SK-N-SH (cell line): ENCODE measurements at regions of chr3 and their contacts with region 1.

Region 1: DNA sequence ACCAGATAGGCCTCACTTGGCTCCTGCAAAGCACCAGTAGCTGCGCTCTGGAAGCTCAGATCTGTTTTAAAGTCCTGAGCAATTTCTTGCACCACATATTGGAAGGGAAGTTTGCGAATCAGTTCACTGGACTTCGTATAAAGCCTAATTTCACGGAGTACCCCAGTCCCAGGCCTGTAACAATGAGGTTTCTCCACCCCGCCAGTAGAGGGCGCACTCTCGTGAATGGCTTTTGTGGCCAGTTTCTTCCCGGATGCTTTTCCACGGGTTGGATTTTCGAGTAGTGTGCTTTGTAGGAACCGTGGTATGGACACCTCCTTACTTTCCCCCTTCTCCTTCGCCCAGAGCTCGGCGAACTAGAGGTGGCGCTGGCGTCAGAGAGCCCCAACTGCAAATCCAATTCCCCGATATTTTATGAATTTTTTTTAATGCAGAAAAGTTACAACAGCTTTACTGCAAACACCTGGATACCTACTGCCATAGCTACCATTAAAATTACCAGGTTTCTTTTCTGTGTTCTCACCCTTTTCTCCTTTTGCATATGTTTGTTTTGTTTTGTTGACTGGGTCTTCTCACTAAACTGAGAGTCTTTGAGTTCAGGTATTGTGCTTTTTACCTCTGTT is 13.3 kb downstream of the RARB start:
- DNase-seq: no peak
- H3K4me3 ChIP-seq: no peak overlapping the region
- H3K27ac ChIP-seq: no peak overlapping the region; a peak in 1 of 4 replicates
- H3K4me1 ChIP-seq: peaks cover 5 to 14% of the 10 kb centered on the region in 2 experiments
- H3K27me3 ChIP-seq: no peaks in the 10 kb centered on the region
- CTCF ChIP-seq: peak; percentile 80
- EP300 ChIP-seq: no peak
- RAD21 ChIP-seq: no peak

Region 2: GRCh38 chr3:25291101-25291905 is 150.0 kb before region 1 on chr3:
- CTCF ChIA-PET with region 1: no interaction called
- POLR2A ChIA-PET with region 1: no interaction called
- DNase-seq: no peak
- H3K4me3 ChIP-seq: no peak overlapping the region
- H3K27ac ChIP-seq: no peak overlapping the region
- H3K4me1 ChIP-seq: peaks cover 0 to 7% of the 10 kb centered on the region in 2 experiments; a peak in 1 of 4 replicates
- H3K27me3 ChIP-seq: no peaks in the 10 kb centered on the region
- CTCF ChIP-seq: no peak
- EP300 ChIP-seq: no peak
- RAD21 ChIP-seq: no peak

Region 3: DNA sequence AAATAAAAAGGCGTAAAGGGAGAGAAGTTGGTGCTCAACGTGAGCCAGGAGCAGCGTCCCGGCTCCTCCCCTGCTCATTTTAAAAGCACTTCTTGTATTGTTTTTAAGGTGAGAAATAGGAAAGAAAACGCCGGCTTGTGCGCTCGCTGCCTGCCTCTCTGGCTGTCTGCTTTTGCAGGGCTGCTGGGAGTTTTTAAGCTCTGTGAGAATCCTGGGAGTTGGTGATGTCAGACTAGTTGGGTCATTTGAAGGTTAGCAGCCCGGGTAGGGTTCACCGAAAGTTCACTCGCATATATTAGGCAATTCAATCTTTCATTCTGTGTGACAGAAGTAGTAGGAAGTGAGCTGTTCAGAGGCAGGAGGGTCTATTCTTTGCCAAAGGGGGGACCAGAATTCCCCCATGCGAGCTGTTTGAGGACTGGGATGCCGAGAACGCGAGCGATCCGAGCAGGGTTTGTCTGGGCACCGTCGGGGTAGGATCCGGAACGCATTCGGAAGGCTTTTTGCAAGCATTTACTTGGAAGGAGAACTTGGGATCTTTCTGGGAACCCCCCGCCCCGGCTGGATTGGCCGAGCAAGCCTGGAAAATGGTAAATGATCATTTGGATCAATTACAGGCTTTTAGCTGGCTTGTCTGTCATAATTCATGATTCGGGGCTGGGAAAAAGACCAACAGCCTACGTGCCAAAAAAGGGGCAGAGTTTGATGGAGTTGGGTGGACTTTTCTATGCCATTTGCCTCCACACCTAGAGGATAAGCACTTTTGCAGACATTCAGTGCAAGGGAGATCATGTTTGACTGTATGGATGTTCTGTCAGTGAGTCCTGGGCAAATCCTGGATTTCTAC is 13.2 kb before region 1 on chr3 and contains the start of gene RARB:
- CTCF ChIA-PET with region 1: interaction called, 31 read pairs
- POLR2A ChIA-PET with region 1: interaction called, 4 read pairs
- DNase-seq: peak; percentile 83
- H3K4me3 ChIP-seq: peak within 1 kb of the TSS; percentile 70 to 80
- H3K27ac ChIP-seq: peak within 1 kb of the TSS; percentile 89 to 97
- H3K4me1 ChIP-seq: peaks cover 11 to 26% of the 10 kb centered on the region in 2 experiments; a peak in 3 of 4 replicates
- H3K27me3 ChIP-seq: no peaks in the 10 kb centered on the region
- CTCF ChIP-seq: no peak
- EP300 ChIP-seq: peak; percentile 31 to 54; a peak in 2 of 4 replicates
- RAD21 ChIP-seq: peak; percentile 44
- polyA plus RNA-seq, gene RARB: 10.7 and 15.2 TPM in 2 replicates